Dorsolateral prefrontal cortex (tissue), 120 donors: ENCODE measurements at regions of chr4 and their contacts with region 1.

Region 1: DNA sequence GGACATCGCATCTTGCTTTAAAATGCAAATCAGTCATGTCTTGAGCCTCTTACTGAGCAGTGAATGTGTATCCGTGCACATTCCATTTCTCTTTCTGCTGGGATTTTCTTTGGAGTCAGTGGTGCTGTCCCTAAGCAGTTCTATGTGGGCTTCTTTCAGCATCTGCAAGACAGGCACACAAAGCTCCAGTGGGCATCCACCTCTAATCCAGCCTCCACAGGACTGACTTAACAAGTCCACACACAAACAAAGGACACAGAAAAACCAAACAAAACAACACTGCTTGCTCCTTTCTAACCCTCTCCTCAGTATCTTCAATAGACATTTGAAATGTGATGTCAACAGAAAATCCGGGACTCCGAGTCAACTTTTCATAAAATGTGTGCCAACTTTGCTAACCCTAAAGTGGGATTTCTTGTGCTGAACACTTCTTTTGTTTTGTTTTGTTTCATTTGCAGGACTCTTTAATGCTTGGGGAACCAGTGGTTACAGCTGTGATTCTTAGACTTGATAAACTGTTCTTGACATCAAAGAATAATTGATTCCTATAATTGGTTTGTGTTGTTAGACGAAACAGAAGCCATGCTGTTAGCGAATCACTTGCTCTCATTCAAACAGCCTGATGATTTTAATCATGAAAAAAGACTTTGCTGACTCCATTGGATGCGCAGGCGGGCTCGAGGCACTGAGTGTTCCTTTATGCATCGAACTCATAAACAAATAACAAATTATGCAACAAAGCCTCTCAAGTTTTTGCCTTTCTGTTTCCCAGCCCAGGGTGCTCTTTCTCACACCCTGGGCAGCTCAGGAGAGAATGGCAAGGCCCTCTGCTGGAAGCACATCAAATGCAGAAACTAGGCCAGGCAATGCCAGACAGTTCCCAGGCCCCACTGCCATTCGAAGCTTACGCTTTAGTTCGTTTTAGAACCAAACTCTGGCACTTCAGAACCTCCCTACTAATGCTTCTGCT is 20.1 kb downstream of the ETNPPL start:
- DNase-seq: peak in 6 of 10 donors; percentile 24 to 55 (median 48)
- H3K4me3 ChIP-seq: peak overlapping the region in 15 of 59 donors; percentile 1 to 42 (median 15)
- H3K27ac ChIP-seq: peak overlapping the region in 57 of 59 donors; percentile 17 to 91 (median 69)
- H3K27me3 ChIP-seq: peaks cover 0 to 2% (median 0%) of the 10 kb centered on the region in 45 donors
- CTCF ChIP-seq: peak in 24 of 56 donors; percentile 4 to 42 (median 22)

Region 2: DNA sequence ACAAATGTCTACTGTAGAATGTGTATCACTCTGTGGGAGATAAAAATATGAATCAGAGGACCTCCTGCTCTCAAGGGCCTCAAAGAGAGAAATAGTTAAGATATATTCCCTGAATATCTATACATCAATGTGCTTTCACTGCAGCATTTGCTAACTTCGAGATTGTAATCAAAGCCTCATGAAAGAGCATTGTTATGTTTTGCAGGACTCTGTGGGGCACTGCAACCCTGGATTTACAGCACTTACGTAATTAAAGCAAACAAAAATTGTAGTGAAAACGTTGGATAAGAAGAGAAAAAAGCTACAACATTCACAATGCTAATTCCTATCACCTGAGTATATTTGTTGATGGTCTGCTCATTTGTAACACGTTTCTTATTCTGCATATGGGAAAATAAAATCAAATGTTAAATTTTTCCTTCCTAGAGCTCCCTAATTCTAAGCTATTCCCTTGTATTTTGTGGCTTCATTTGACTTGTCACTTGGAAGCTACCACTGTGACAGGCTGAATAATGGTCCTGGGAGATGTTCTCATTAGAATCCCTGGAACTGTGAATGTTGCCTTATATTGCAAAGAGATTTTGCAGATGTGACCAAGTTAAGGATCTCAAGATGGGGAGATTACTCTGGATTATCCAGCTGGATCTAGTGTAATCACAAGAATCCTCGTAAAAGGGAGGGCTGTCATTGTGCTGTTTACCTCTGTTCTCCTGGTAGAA is 27.7 kb before region 1 on chr4:
- intact Hi-C with region 1: loop called in 1 of 2 experiments (anchors 2 kb)
- DNase-seq: no peak
- H3K4me3 ChIP-seq: no peak overlapping the region
- H3K27ac ChIP-seq: no peak overlapping the region
- H3K27me3 ChIP-seq: no peaks in the 10 kb centered on the region
- CTCF ChIP-seq: no peak

Region 3: DNA sequence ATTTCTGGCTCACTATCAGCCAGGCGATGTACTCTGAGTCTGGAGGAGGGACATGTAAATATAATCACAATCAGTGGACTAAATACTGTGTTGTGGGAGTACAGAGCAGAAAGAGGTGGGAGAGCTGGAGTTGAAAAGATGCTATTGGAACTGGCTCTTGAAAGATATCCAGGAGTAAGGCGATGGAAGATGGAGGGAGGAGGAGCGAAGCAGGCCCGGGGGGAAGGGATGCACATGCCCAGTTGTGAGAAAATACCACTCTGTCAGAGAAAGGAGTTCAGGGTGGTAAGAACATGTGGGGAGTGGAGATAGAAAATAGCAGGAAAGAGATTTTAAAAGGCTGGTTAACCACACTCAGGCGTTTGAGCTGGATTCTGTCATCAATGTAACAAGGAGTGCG is 237.0 kb after region 1 on chr4:
- intact Hi-C with region 1: no loop called
- DNase-seq: no peak
- H3K4me3 ChIP-seq: no peak overlapping the region
- H3K27ac ChIP-seq: no peak overlapping the region
- H3K27me3 ChIP-seq: no peaks in the 10 kb centered on the region
- CTCF ChIP-seq: no peak